Activated naive CD4-positive, alpha-beta T cell treated with anti-CD3 and anti-CD28 coated beads for 36 hours (primary cell): ENCODE measurements at regions of chr12 and their contacts with region 1.

Region 1: DNA sequence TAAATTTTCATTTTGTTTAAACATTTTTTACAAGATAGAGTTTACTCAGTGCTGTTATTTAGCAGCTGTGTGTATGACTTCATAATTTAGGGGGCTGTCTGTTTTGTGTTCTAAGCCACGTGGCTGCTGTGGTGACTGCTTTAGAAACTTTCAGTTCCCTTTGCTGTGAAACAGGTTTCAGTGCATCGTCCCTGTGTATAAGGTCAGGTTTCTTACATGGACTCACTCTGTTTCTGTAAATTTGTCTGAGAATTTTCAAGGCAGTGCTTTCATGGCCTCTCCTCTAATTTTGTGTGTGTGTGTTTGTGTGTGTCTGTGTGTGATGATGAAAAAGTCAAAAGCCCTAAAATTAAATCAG is 32.4 kb downstream of the BICD1 start:
- DNase-seq: peak; percentile 74
- H3K4me3 Mint-ChIP-seq: peak overlapping the region; percentile 71
- H3K27ac Mint-ChIP-seq: no peak overlapping the region
- H3K4me1 Mint-ChIP-seq: peaks cover 24% of the 10 kb centered on the region
- H3K27me3 Mint-ChIP-seq: peaks cover 2% of the 10 kb centered on the region

Region 2: DNA sequence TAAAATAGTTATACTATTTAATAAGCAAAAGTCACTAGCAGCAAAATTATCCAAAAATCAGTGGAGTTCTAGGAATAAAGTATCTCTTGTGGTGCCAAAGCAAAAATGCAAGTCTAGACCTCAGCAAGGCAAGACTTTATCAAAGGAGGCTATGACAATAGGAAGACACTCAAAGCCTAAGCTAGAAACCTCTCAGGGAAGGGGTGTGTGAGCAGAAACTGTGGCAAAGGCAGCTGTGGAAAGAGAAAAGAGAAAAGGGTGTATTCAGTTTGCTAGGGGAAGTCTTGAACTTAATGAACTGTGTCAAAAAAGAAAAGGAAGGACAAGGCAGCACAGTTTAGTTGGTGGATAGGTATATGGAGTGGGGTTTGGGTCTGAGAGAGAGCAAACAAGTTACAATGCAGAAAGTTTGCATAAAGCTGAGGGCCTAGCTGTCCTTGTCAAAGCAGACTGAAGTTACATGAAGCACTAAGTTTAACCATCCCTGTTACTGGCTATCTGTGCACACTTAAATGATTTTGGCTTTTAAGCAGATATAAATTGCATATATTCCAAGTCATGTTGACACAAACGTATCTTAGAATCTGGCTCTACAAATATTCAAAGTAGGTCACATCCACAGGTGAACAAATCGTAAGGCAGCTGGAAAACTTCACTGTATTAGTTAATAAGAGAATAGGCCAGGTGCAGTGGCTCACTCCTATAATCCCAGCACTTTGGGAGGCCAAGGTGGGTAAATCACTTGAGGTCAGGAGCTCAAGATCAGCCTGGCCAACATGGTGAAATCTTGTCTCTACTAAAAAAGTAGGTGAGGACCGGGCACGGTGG is 379.2 kb before region 1 on chr12:
- CTCF ChIA-PET with region 1: no interaction called
- intact Hi-C with region 1: no loop called
- DNase-seq: no peak
- H3K4me3 Mint-ChIP-seq: no peak overlapping the region
- H3K27ac Mint-ChIP-seq: no peak overlapping the region
- H3K4me1 Mint-ChIP-seq: peaks cover 17% of the 10 kb centered on the region
- H3K27me3 Mint-ChIP-seq: no peaks in the 10 kb centered on the region

Region 3: GRCh38 chr12:31832740-31833729 is 306.0 kb before region 1 on chr12:
- CTCF ChIA-PET with region 1: no interaction called
- intact Hi-C with region 1: loop called (anchors 1 kb)
- DNase-seq: peak; percentile 63
- H3K4me3 Mint-ChIP-seq: no peak overlapping the region
- H3K27ac Mint-ChIP-seq: peak overlapping the region; percentile 89
- H3K4me1 Mint-ChIP-seq: peaks cover 46% of the 10 kb centered on the region
- H3K27me3 Mint-ChIP-seq: no peaks in the 10 kb centered on the region

Region 4: GRCh38 chr12:32025906-32026305 is 113.1 kb before region 1 on chr12:
- CTCF ChIA-PET with region 1: no interaction called
- intact Hi-C with region 1: loop called (anchors 1 kb)
- DNase-seq: peak; percentile 84
- H3K4me3 Mint-ChIP-seq: no peak overlapping the region
- H3K27ac Mint-ChIP-seq: peak overlapping the region; percentile 81
- H3K4me1 Mint-ChIP-seq: peaks cover 24% of the 10 kb centered on the region
- H3K27me3 Mint-ChIP-seq: no peaks in the 10 kb centered on the region

Region 5: DNA sequence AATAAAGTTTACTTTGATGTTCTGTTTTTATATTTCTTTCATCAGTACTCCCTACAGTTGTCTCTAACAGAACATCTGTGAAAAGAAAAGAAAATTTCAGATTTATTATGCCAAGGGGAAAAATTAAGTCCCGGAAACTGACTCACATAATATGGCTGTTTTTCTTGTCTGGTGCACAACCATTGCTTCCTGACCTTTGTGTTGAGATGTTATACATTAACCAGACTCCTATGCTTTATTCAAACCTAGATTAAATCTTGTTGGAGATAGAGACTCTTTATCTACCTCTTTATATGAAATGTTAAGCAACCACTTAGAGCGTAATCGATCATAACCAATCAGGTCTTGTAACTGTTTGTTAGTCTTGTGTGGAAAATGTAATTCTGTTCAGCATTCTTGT is 70.0 kb before region 1 on chr12:
- CTCF ChIA-PET with region 1: no interaction called
- intact Hi-C with region 1: no loop called
- DNase-seq: no peak
- H3K4me3 Mint-ChIP-seq: no peak overlapping the region
- H3K27ac Mint-ChIP-seq: no peak overlapping the region
- H3K4me1 Mint-ChIP-seq: no peaks in the 10 kb centered on the region
- H3K27me3 Mint-ChIP-seq: no peaks in the 10 kb centered on the region

Region 6: GRCh38 chr12:32159925-32160324 is 20.9 kb after region 1 on chr12:
- CTCF ChIA-PET with region 1: no interaction called
- intact Hi-C with region 1: loop called (anchors 2 kb)
- DNase-seq: no peak
- H3K4me3 Mint-ChIP-seq: no peak overlapping the region
- H3K27ac Mint-ChIP-seq: no peak overlapping the region
- H3K4me1 Mint-ChIP-seq: no peaks in the 10 kb centered on the region
- H3K27me3 Mint-ChIP-seq: no peaks in the 10 kb centered on the region

Region 7: DNA sequence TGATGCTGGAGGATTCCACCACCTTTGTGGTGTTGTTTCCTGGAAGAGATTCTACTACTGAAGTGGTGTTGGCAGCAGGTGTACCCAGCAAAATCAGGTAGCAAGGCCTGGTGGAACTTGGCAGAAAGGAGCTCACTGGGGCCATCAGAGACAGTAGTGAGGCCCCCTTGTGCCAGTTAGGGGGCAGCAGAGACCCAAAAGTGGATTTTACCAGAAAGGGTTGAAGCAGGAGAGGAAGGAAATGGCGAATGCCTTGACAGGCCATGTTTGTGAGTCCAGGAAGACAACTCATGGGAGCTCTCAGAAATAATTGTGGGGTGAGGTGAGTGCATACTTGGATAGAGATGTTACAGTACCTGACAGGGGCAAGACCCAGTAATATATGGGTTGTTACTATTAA is 122.6 kb after region 1 on chr12:
- CTCF ChIA-PET with region 1: no interaction called
- intact Hi-C with region 1: loop called (anchors 1 kb)
- DNase-seq: peak; percentile 46
- H3K4me3 Mint-ChIP-seq: no peak overlapping the region
- H3K27ac Mint-ChIP-seq: no peak overlapping the region
- H3K4me1 Mint-ChIP-seq: peaks cover 21% of the 10 kb centered on the region
- H3K27me3 Mint-ChIP-seq: no peaks in the 10 kb centered on the region